ENCODE measurements at regions of chr3 and their contacts with region 1.

Region 1: GRCh38 chr3:71859123-71859519 is 74.2 kb upstream of the PROK2 start:
- DNase-seq: peak; percentile 33
- H3K4me3 Mint-ChIP-seq: no peak overlapping the region
- H3K27ac Mint-ChIP-seq: no peak overlapping the region
- H3K4me1 Mint-ChIP-seq: peaks cover 8% of the 10 kb centered on the region
- H3K27me3 Mint-ChIP-seq: peaks cover 12% of the 10 kb centered on the region

Region 2: DNA sequence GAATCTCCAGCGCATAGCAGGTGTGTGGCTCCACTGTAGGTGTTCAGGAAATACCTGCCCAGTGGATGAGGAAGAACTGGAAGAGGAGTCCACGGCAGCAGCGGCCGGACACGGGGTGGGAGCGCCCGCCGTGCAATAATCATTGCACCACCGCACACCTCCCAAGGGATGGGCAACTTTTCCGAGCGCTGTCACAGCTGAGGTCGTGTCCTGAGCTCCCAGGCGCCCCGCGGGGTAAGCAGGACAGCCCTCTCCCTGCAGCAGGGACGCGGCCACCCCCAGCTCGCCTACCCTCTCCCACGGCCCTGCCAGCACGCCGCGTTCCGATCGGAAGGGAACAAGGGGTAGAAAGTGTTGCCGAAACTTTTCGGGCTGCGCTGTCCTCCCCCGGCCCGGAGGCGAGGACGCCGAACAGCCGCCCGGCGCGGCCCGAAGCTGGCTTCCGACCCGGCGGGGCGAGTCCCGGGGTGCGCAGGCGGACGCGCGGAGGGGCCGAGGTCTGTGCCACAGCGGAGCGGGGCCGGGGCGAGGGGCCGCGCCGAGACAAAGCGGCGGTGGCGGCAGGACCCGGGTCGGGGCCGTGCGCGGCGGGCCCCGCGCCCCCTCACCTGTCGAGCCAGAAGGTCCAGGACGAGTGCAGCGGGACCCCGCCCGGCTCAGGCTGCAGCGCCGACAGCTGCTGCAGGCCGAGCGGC is 134.4 kb before region 1 on chr3:
- CTCF ChIA-PET with region 1: interaction called, 37 read pairs
- DNase-seq: peak; percentile 52
- H3K4me3 Mint-ChIP-seq: peak overlapping the region; percentile 94
- H3K27ac Mint-ChIP-seq: peak overlapping the region; percentile 88
- H3K4me1 Mint-ChIP-seq: peaks cover 68% of the 10 kb centered on the region
- H3K27me3 Mint-ChIP-seq: no peaks in the 10 kb centered on the region

Region 3: GRCh38 chr3:71817262-71817661 is 41.9 kb before region 1 on chr3:
- CTCF ChIA-PET with region 1: no interaction called
- DNase-seq: no peak
- H3K4me3 Mint-ChIP-seq: no peak overlapping the region
- H3K27ac Mint-ChIP-seq: no peak overlapping the region
- H3K4me1 Mint-ChIP-seq: no peaks in the 10 kb centered on the region
- H3K27me3 Mint-ChIP-seq: peaks cover 8% of the 10 kb centered on the region

Region 4: DNA sequence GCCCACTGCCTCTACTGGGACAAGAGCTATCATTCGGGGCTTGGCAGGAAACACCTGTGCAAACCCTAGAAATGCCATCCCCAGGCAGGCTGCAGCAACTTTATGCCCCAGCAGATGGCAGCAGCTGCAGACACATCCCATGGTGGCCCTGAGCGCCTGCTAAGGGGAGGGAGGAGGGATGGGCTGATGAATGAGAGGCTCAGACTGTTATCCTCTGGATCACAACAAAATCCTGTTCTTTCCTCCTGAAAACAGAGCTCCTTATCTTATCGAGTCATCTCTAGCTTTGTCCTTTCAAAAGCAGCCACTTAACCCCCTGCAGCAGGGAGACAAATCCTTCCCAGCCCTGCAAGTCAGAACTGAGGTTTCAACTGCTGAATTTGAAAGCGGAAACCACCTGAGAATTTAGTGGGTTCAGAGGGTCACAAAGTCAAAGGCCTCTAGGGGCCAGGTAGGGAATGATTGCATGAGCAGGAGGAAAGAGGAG is 16.4 kb after region 1 on chr3:
- CTCF ChIA-PET with region 1: interaction called, 22 read pairs
- DNase-seq: peak; percentile 85
- H3K4me3 Mint-ChIP-seq: no peak overlapping the region
- H3K27ac Mint-ChIP-seq: no peak overlapping the region
- H3K4me1 Mint-ChIP-seq: peaks cover 21% of the 10 kb centered on the region
- H3K27me3 Mint-ChIP-seq: no peaks in the 10 kb centered on the region